Heart right ventricle (tissue), 16 donors: ENCODE measurements at regions of chr10 and their contacts with region 1.

Region 1: GRCh38 chr10:97081621-97082235 is 104.0 kb downstream of the SLIT1 start:
- DNase-seq: peak; percentile 50 to 54
- ATAC-seq: peak in 5 of 8 donors; percentile 57 to 75 (median 69)
- H3K4me3 ChIP-seq: no peak overlapping the region
- H3K27ac ChIP-seq: no peak overlapping the region
- H3K4me1 ChIP-seq: no peaks in the 10 kb centered on the region
- H3K27me3 ChIP-seq: peaks cover 0 to 17% (median 0%) of the 10 kb centered on the region in 7 donors
- CTCF ChIP-seq: peak; percentile 14 to 74 (median 66)

Region 2: GRCh38 chr10:96930469-96930868 is 151.3 kb before region 1 on chr10:
- intact Hi-C with region 1: no loop called
- DNase-seq: no peak
- ATAC-seq: no peak
- H3K4me3 ChIP-seq: no peak overlapping the region
- H3K27ac ChIP-seq: no peak overlapping the region
- H3K4me1 ChIP-seq: peaks cover 0 to 6% (median 0%) of the 10 kb centered on the region in 9 donors
- H3K27me3 ChIP-seq: no peaks in the 10 kb centered on the region
- CTCF ChIP-seq: no peak

Region 3: DNA sequence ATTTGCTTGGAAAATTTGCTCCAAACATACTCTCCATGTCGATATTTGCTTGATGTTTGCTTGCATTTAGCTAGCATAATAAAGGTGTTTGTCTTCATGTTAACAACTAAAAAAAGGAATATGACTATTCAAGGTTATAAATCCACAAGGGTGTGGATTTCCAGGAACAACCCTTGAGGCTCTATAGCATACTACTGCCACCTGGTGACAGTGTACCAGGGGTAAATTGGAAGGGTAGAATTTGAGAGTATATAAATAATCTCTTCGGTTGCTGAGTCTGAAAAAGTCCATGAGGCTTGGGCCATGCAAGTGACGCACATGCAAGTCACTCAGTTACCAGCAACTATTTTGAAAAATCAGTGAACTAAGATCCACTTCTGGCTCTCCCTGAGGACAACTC is 35.6 kb after region 1 on chr10:
- intact Hi-C with region 1: loop called in 2 of 10 experiments (anchors 5 kb)
- DNase-seq: no peak
- ATAC-seq: peak in 4 of 8 donors; percentile 37 to 60 (median 44)
- H3K4me3 ChIP-seq: no peak overlapping the region
- H3K27ac ChIP-seq: no peak overlapping the region
- H3K4me1 ChIP-seq: peaks cover 0 to 3% (median 0%) of the 10 kb centered on the region in 9 donors
- H3K27me3 ChIP-seq: peaks cover 0 to 23% (median 9%) of the 10 kb centered on the region in 7 donors
- CTCF ChIP-seq: peak; percentile 31 to 66 (median 45)